Activated naive CD4-positive, alpha-beta T cell treated with anti-CD3 and anti-CD28 coated beads for 36 hours (primary cell): ENCODE measurements at regions of chr20 and their contacts with region 1.

Region 1: GRCh38 chr20:815914-816606 is 17.5 kb upstream of the FAM110A start:
- DNase-seq: peak; percentile 76
- H3K4me3 Mint-ChIP-seq: no peak overlapping the region
- H3K27ac Mint-ChIP-seq: no peak overlapping the region
- H3K4me1 Mint-ChIP-seq: peaks cover 3% of the 10 kb centered on the region
- H3K27me3 Mint-ChIP-seq: peaks cover 8% of the 10 kb centered on the region

Region 2: GRCh38 chr20:833450-834150 is 17.5 kb after region 1 on chr20 and contains the start of gene FAM110A:
- CTCF ChIA-PET with region 1: interaction called, 26 read pairs
- intact Hi-C with region 1: loop called (anchors 1 kb)
- DNase-seq: peak; percentile 97
- H3K4me3 Mint-ChIP-seq: peak within 1 kb of the TSS; percentile 92
- H3K27ac Mint-ChIP-seq: peak within 1 kb of the TSS; percentile 73
- H3K4me1 Mint-ChIP-seq: peaks cover 37% of the 10 kb centered on the region
- H3K27me3 Mint-ChIP-seq: no peaks in the 10 kb centered on the region
- total RNA-seq, gene FAM110A: 15.4 to 16.2 TPM

Region 3: DNA sequence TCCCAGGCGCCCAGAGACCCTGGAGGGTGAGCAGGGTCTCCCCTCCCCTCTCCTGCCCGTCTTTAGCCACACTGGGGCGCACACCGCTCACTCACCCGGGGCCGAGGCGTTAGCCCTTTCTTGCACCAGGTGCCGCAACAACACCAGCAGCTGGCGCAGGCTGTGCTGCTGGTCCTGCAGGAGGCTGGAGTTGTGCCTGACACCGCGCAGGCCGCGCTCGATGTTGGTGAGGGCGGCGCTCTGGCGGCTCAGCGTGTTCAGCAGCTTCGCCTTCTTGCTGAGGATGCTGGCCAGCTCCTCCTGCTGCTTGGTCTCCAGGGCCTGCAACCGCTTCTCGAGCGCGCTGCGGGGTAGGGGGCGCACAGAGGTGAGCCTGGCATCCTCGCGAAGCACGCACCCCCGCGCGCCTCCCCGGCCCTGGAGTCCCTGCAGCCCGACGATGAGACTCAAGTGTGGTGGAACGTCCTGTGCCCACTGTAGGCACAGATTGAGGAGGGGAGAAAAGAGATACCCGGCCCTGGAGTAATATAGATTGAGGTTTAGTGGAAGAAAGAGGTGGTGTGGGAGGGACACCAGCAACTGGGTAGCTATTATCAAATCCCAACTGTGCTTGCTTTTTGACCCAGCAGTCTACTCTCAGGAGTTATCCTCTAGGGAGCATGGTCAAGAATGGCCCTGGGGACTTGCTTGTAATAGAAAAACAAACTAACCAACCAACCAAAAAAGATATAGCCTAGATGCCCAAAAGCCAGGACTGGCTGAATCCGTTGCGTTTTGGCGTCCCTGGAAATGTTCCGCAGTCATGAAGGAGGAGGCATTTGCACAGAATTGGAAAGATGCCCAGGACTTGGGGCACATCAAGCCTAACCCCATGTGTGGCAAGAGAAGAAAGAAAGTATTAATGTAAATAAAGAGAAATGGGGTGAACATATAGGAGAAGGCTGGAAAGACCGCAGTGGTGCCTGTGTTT is 69.2 kb after region 1 on chr20:
- CTCF ChIA-PET with region 1: interaction called, 3 read pairs
- intact Hi-C with region 1: loop called (anchors 5 kb)
- DNase-seq: peak; percentile 32
- H3K4me3 Mint-ChIP-seq: no peak overlapping the region
- H3K27ac Mint-ChIP-seq: no peak overlapping the region
- H3K4me1 Mint-ChIP-seq: peaks cover 13% of the 10 kb centered on the region
- H3K27me3 Mint-ChIP-seq: peaks cover 14% of the 10 kb centered on the region

Region 4: GRCh38 chr20:956330-956951 is 140.4 kb after region 1 on chr20:
- CTCF ChIA-PET with region 1: interaction called, 179 read pairs
- intact Hi-C with region 1: loop called (anchors 1 kb)
- DNase-seq: peak; percentile 82
- H3K4me3 Mint-ChIP-seq: no peak overlapping the region
- H3K27ac Mint-ChIP-seq: no peak overlapping the region
- H3K4me1 Mint-ChIP-seq: peaks cover 2% of the 10 kb centered on the region
- H3K27me3 Mint-ChIP-seq: peaks cover 23% of the 10 kb centered on the region

Region 5: GRCh38 chr20:1108437-1108920 is 292.4 kb after region 1 on chr20:
- CTCF ChIA-PET with region 1: interaction called, 18 read pairs
- intact Hi-C with region 1: loop called (anchors 1 kb)
- DNase-seq: peak; percentile 76
- H3K4me3 Mint-ChIP-seq: no peak overlapping the region
- H3K27ac Mint-ChIP-seq: no peak overlapping the region
- H3K4me1 Mint-ChIP-seq: peaks cover 3% of the 10 kb centered on the region
- H3K27me3 Mint-ChIP-seq: no peaks in the 10 kb centered on the region

Region 6: DNA sequence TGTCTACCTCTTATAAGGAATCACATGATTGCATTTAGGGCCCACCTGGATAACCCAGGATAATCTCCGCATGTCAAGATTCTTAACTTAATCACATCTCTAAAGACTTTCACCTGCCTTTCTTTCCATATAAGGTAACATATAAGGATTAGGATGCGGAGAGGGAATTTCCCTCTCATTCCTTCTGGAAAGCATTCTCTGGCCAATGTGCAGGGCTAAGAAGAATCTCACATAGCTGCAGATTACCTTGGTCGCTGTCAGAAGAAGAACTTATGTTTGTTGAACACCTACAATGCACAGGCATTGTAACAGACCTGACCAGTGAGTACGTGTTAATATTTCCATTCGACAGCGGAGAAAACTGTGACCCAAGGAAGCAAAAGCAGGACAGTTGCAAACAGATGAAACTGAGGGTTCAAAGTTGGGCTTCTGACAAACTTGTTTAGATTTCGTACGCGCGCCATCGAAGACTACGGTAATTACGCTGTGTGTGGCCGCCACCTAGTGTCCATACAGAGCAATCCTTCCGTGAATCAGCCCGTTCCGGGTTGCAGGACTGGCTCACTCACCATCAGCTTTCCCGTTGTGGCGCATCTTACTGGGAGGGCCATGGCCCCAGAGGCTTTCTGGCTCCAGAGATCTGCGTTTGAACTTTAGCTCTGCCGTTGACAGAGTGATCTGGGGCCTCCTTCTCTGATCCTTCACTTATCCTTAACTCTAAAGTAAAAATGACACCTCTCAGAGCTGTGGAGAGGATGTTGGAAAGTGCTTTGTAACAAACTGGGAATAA is 396.7 kb after region 1 on chr20:
- CTCF ChIA-PET with region 1: interaction called, 4 read pairs
- intact Hi-C with region 1: loop called (anchors 1 kb)
- DNase-seq: peak; percentile 88
- H3K4me3 Mint-ChIP-seq: no peak overlapping the region
- H3K27ac Mint-ChIP-seq: no peak overlapping the region
- H3K4me1 Mint-ChIP-seq: peaks cover 39% of the 10 kb centered on the region
- H3K27me3 Mint-ChIP-seq: no peaks in the 10 kb centered on the region